GM13976 (cell line): ENCODE measurements at regions of chr1 and their contacts with region 1.

Region 1: DNA sequence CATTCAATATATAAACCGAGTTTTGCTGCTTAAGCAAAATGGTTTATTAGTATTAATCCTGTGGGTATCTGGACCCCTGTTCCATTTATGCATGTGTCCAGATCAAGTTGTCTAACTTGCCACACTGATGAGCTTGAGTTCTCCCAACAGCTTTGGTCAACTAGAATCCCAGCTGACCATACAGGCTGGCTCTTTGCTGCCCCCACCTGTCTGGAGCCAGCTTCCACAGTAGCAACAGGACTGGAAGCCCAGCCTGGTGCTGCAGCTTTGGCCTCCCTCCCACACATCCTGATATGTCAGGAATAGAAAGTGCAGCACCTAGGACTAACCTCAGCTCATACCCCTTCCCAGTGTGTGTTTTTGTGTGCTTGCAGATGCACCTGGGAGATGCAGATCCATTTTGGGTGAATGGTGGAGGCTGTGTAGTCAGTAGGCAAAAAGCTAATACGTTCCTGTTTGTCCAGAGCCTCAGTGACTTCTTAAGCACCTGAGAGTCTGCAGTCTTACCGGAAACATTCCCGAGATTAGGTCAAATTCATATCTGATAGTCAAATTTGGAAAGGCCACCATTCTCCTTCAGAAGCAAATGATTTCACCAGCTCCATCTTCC is 40.9 kb upstream of the BEND5 start:
- DNase-seq: peak; percentile 37
- CTCF ChIP-seq: peak; percentile 85

Region 2: DNA sequence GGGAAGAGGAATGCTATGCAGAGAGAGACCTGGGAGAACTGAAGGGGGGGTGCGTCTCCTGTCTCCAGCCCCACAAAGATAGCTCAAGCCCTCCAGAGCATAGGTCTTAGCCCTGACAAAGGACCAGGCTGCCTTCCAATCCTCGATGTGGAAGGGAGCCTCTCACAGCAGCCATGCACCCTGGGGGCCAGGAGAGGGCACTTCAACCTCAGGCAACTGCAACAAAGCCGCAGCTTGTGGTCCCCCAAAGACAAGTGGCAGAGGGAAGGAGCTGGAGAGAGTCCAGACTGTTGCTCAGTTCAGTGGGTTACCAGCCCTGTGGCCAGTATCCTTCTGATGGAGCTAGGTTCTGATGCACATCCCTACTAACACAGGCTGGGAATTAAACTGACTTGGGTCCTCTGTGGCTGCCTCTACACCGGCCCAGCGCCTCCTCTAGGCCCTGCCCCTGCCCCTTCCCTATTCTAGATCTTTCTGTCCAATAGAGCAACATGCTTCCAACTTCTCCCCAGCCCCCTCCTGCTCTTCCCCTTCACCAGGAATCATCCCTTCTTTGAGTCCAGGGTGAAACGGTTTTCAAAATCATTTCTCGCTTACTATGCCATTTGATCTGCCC is 244.9 kb before region 1 on chr1:
- in situ Hi-C with region 1: loop called (anchors 25 kb)
- DNase-seq: peak; percentile 48
- CTCF ChIP-seq: no peak

Region 3: GRCh38 chr1:48688102-48688760 is 129.4 kb before region 1 on chr1:
- in situ Hi-C with region 1: loop called (anchors 10 kb)
- DNase-seq: peak; percentile 40
- CTCF ChIP-seq: no peak

Region 4: DNA sequence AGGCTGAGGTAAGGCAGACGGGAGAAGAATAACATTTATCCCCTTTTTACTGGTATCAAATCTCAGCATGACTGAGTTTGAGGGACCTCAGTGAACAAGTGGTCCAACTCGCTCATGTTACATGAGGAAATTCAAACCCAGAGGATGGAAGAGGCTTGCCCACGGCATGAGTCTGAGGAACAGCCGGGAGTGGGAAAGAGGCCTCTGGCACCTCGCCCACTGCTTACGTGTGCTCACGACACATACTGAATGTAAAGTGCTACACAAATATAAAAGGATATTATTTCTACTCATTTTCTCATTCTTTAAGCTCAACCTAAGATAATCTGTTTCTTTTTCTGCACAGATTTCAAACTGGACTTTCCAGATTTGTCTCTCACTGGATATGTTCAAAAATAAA is 55.6 kb before region 1 on chr1:
- in situ Hi-C with region 1: no loop called
- DNase-seq: no peak
- CTCF ChIP-seq: no peak

Region 5: DNA sequence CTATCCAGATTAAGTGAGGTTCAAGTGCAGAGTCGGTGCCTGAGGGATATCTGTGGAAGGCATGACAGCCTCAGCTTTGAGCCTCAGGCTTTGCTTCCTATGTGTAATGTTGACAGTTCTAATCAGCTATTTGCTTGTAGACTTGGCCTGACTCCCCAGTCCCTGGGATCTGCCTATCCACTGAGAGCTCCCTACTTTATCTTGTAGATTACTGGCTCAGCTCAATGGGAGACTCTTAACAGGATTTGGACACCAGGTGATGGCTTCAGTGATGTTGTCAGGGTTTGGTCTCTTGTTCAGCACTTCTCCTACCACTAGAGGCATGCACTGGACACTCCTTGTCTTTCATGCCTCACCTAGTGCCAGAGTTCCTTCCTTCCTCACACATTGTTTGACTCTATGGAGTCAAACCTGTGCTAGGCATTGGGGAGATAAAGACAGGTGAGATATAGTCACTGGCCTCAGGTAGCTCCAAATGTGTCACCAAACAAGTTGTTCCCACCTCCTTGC is 85.7 kb after region 1 on chr1:
- in situ Hi-C with region 1: no loop called
- DNase-seq: no peak
- CTCF ChIP-seq: no peak